Transverse colon (tissue), 4 donors: ENCODE measurements at regions of chr18 and their contacts with region 1.

Region 1: DNA sequence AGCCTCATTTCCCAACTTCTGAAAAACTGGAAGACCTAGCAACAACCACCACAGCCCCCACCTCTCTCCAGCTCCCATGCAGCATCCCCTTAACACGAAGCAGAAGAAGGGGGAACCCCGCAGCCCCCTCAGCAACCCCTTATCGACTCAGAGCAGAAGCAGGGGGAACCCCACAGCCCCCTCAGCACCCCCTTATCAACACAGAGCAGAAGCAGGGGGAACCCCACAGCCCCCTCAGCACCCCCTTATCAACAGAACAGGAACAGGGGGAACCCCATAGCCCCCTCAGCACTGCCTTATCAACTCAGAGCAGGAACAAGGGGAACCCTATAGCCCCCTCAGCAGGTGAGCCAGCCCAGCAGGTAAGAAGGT is 6.7 kb downstream of the SLC66A2 start:
- DNase-seq: peak; percentile 4
- H3K4me3 ChIP-seq: no peak overlapping the region
- H3K27ac ChIP-seq: peak overlapping the region; percentile 68 to 88 (median 76)
- H3K4me1 ChIP-seq: peaks cover 18 to 93% (median 62%) of the 10 kb centered on the region in 4 donors
- H3K27me3 ChIP-seq: no peaks in the 10 kb centered on the region
- CTCF ChIP-seq: no peak
- EP300 ChIP-seq: no peak
- POLR2A ChIP-seq: no peak

Region 2: GRCh38 chr18:79912409-79912991 is 32.2 kb before region 1 on chr18:
- in situ Hi-C with region 1: no loop called
- intact Hi-C with region 1: loop called (anchors 1 kb)
- DNase-seq: peak; percentile 5
- H3K4me3 ChIP-seq: no peak overlapping the region
- H3K27ac ChIP-seq: no peak overlapping the region
- H3K4me1 ChIP-seq: no peaks in the 10 kb centered on the region
- H3K27me3 ChIP-seq: no peaks in the 10 kb centered on the region
- CTCF ChIP-seq: no peak
- EP300 ChIP-seq: no peak
- POLR2A ChIP-seq: no peak

Region 3: DNA sequence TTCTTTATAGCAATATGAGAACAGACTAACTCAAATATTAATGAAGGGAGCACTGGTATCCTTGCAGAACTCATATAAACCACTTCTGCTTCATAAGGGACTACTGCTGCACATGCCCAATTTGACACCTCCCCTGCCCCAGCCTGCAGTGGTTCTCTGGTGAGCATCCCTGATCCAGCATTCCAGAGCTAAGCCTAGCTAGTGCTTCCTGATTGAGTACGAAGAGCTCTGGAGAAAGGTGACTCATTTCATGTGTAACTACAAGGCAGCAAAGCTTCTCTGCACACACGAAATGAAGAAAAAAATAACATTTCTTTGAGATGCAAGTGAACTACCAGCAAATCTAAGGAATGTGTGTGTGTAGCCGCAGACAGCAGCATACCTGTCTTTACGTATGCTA is 141.5 kb after region 1 on chr18:
- in situ Hi-C with region 1: no loop called
- intact Hi-C with region 1: no loop called
- DNase-seq: no peak
- H3K4me3 ChIP-seq: no peak overlapping the region
- H3K27ac ChIP-seq: no peak overlapping the region
- H3K4me1 ChIP-seq: no peaks in the 10 kb centered on the region
- H3K27me3 ChIP-seq: no peaks in the 10 kb centered on the region
- CTCF ChIP-seq: no peak
- EP300 ChIP-seq: no peak
- POLR2A ChIP-seq: no peak